Naive thymus-derived CD4-positive, alpha-beta T cell (primary cell): ENCODE measurements at regions of chr5 and their contacts with region 1.

Region 1: DNA sequence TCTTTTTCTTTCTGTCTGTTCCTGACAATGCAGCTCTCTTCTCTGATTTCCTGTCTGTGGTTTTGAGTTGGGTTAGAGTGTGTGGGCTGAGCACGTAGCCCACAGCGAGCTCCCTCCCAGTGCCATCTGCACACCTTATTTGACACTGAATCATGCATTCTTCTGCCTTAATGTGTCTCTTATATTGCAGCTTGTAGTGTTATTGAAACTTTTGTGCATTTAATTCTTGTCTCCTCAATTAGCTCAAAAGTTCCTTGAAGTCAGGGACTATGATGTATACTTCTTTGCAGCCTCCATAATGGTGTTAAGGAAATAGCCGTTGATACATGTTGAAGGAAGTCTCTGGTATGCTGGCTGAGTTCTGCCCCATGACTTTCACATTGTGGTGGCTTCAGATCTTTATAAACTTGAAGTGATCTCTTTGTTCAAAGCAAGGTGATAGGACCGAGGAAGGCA is 576.2 kb upstream of the CLINT1 start:
- DNase-seq: peak in 8 of 9 donors; percentile 19 to 70 (median 56)
- ATAC-seq: peak; percentile 88
- H3K4me3 ChIP-seq: peak overlapping the region; percentile 2
- H3K4me3 Mint-ChIP-seq: peak overlapping the region; percentile 61 to 85 (median 80)
- H3K27ac ChIP-seq: peak overlapping the region; percentile 28
- H3K27ac Mint-ChIP-seq: peak overlapping the region; percentile 49 to 89 (median 74)
- H3K4me1 ChIP-seq: peaks cover 9 to 51% of the 10 kb centered on the region in 2 donors
- H3K4me1 Mint-ChIP-seq: peaks cover 21 to 73% (median 64%) of the 10 kb centered on the region in 7 donors
- H3K27me3 ChIP-seq: no peaks in the 10 kb centered on the region
- H3K27me3 Mint-ChIP-seq: no peaks in the 10 kb centered on the region

Region 2: GRCh38 chr5:158511454-158511853 is 76.3 kb after region 1 on chr5:
- CTCF ChIA-PET with region 1: no interaction called
- POLR2A ChIA-PET with region 1: no interaction called
- intact Hi-C with region 1: loop called in 1 of 2 experiments (anchors 10 kb)
- DNase-seq: peak in 2 of 9 donors; percentile 7 to 20
- ATAC-seq: peak; percentile 44
- H3K4me3 ChIP-seq: no peak overlapping the region
- H3K4me3 Mint-ChIP-seq: peak overlapping the region in 3 of 10 donors; percentile 17 to 37 (median 30)
- H3K27ac ChIP-seq: no peak overlapping the region
- H3K27ac Mint-ChIP-seq: peak overlapping the region in 7 of 9 donors; percentile 11 to 81 (median 41)
- H3K4me1 ChIP-seq: peaks cover 0 to 21% of the 10 kb centered on the region in 2 donors
- H3K4me1 Mint-ChIP-seq: peaks cover 10 to 51% (median 41%) of the 10 kb centered on the region in 7 donors
- H3K27me3 ChIP-seq: no peaks in the 10 kb centered on the region
- H3K27me3 Mint-ChIP-seq: no peaks in the 10 kb centered on the region

Region 3: DNA sequence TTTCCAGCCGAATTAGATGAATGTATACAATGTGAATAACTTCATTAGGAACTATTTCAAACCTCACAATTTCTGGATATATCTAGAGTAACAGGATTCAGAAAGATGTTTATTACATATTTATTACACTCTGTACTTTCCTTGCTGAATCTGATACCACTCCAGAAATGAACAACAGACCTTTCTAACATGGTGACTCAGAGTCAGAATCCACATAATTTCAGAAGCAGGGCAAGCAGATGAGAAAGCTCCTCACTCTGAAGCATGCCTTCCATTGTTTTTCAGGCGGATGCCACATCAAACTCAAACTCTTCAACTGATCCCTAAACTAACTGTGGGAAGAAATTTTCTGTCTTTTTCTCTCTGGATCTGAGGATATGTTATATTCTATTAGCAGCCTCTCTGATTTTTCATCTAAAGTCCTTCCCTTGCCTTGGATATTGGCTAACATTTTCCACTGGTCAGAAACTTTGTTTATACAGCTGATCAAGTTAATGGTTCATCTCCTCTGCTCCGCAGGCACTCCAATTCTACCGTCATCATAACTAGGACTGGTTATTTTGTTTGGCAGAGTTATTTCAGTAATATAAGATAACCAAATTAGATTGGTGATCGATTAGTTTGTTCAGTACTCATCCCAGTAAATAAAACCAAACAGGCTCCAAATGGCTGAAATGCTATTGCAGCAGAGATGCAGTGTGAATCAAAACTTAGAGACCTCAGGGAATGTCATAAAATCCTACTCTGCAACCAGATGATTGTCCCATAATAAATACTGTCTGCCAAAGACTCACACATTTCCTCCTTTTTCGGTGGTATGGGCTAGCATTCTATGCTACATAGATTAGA is 108.6 kb after region 1 on chr5:
- CTCF ChIA-PET with region 1: no interaction called
- POLR2A ChIA-PET with region 1: no interaction called
- intact Hi-C with region 1: loop called in 1 of 2 experiments (anchors 10 kb)
- DNase-seq: no peak
- ATAC-seq: no peak
- H3K4me3 ChIP-seq: no peak overlapping the region
- H3K4me3 Mint-ChIP-seq: no peak overlapping the region
- H3K27ac ChIP-seq: no peak overlapping the region
- H3K27ac Mint-ChIP-seq: peak overlapping the region in 1 of 9 donors; percentile 4
- H3K4me1 ChIP-seq: peaks cover 0 to 11% of the 10 kb centered on the region in 2 donors
- H3K4me1 Mint-ChIP-seq: peaks cover 4 to 49% (median 21%) of the 10 kb centered on the region in 7 donors
- H3K27me3 ChIP-seq: no peaks in the 10 kb centered on the region
- H3K27me3 Mint-ChIP-seq: peaks cover 0 to 2% (median 0%) of the 10 kb centered on the region in 5 donors